Motor neuron (in vitro differentiated cells): ENCODE measurements at regions of chr4 and their contacts with region 1.

Region 1: GRCh38 chr4:123649645-123650391 is 253.2 kb downstream of the SPRY1 start:
- ATAC-seq: peak; percentile 76 to 94 (median 90)
- H3K4me3 ChIP-seq: peak overlapping the region in 2 of 5 donors; percentile 4 to 7
- H3K27ac ChIP-seq: peak overlapping the region in 1 of 2 donors; percentile 71
- H3K4me1 ChIP-seq: peaks cover 13 to 18% of the 10 kb centered on the region in 2 donors

Region 2: DNA sequence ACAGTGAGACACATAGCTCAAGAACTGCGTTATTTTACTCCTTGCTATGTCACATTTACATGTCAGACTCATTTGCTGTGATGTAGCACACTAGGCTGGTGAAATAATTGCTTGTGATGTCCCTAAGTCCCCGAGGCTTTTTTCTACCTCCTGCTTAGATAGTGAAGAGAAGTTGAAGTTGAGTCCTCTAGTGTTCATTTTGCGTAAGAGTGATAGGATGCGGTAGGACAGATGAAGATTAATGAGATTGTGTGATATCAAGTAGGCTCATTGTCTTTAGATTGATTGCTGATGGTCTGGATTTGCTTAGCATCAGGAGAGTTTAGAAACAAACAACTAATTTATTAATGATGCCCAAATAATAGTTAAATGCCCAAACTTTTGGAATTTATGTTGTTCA is 553.8 kb before region 1 on chr4:
- in situ Hi-C with region 1: loop called in 1 of 9 experiments (anchors 25 kb)
- ATAC-seq: peak in 1 of 8 experiments; percentile 21
- H3K4me3 ChIP-seq: no peak overlapping the region
- H3K27ac ChIP-seq: no peak overlapping the region
- H3K4me1 ChIP-seq: no peaks in the 10 kb centered on the region

Region 3: DNA sequence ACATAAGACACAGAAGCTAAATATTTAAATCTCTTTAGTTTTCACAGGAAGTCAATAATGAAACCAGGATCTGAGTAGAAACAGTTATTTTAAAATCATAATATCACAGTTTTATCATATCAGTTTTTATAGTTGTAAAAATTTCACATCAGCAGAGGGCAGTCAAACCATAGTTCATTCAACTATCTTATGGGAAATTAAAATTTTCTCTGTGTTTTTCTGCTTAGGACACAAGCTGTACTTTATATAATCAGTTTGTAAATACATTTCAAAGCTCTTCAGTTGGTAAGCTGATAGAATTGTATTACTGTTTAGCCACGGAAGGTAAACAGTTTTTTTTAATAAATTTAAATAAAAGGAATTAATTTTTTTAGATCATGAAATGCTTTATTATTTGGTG is 522.6 kb before region 1 on chr4:
- in situ Hi-C with region 1: loop called in 1 of 9 experiments (anchors 25 kb)
- ATAC-seq: peak in 1 of 8 experiments; percentile 41
- H3K4me3 ChIP-seq: no peak overlapping the region
- H3K27ac ChIP-seq: no peak overlapping the region
- H3K4me1 ChIP-seq: no peaks in the 10 kb centered on the region

Region 4: GRCh38 chr4:123418351-123418931 is 231.4 kb before region 1 on chr4:
- in situ Hi-C with region 1: loop called in 1 of 9 experiments (anchors 25 kb)
- ATAC-seq: peak; percentile 29 to 91 (median 64)
- H3K4me3 ChIP-seq: no peak overlapping the region
- H3K27ac ChIP-seq: no peak overlapping the region
- H3K4me1 ChIP-seq: peaks cover 0 to 2% of the 10 kb centered on the region in 2 donors